Cardiac septum (tissue), 1 donor: ENCODE measurements at regions of chr17 and their contacts with region 1.

Region 1: GRCh38 chr17:59837308-59838051 is 55.3 kb downstream of the TUBD1 start:
- DNase-seq: no peak

Region 2: DNA sequence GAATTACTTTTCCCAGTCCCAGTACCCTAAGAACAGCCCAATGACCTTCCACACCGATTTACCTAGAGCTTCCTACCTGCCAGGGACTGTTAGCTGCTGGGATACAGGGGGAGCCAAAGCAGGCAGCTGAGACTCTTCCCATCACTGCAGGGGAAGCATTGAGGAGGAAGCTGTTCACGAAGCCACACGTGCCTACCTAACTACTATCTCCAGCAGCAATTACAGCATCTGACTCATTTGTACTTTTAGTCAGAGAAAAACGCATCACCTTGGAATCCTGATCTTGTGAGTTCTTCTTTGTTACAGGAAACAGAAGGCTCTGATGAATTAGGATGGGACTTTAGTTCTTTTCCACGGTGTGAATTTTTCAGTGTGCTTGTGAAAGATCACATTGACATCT is 385.8 kb before region 1 on chr17:
- intact Hi-C with region 1: no loop called
- DNase-seq: no peak

Region 3: GRCh38 chr17:59786536-59787319 is 50.8 kb before region 1 on chr17:
- intact Hi-C with region 1: loop called (anchors 2 kb)
- DNase-seq: no peak